WTC11 (cell line): ENCODE measurements at regions of chr12 and their contacts with region 1.

Region 1: DNA sequence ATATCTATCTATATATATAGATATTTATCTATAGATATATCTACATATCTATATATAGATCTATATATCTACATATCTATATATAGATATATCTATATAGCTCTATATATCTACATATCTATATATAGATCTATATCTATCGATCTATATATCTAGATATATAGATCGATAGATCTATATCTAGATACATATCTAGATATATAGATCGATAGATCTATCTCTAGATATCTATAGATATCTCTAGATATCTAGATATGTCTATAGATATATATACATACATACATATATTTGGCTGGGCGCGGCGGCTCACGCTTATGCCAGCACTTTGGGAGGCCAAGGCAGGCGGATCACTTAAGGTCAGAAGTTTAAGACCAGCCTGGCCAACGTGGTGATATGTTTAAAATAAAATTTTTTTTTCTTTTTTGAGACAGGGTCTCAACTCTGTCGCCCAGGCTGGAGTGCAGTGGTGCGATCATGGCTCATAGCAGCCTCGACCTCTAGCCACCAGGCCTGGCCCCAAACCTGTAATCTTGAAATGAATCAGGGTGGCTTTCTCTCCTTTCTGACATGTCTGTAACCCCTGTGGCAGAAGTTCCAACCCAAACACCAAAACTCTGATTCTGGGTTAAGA is 18.1 kb downstream of the ARPC3 start:
- DNase-seq: no peak
- ATAC-seq: no peak
- H3K4me3 Mint-ChIP-seq: no peak overlapping the region
- H3K27ac Mint-ChIP-seq: no peak overlapping the region
- H3K4me1 Mint-ChIP-seq: no peaks in the 10 kb centered on the region
- H3K27me3 Mint-ChIP-seq: no peaks in the 10 kb centered on the region
- CTCF ChIP-seq: no peak

Region 2: GRCh38 chr12:110056147-110056484 is 376.0 kb before region 1 on chr12:
- CTCF ChIA-PET with region 1: no interaction called
- POLR2A ChIA-PET with region 1: no interaction called
- DNase-seq: no peak
- ATAC-seq: no peak
- H3K4me3 Mint-ChIP-seq: no peak overlapping the region
- H3K27ac Mint-ChIP-seq: no peak overlapping the region
- H3K4me1 Mint-ChIP-seq: no peaks in the 10 kb centered on the region
- H3K27me3 Mint-ChIP-seq: peaks cover 23% of the 10 kb centered on the region
- CTCF ChIP-seq: no peak

Region 3: GRCh38 chr12:110111476-110112334 is 320.4 kb before region 1 on chr12:
- CTCF ChIA-PET with region 1: interaction called, 10 read pairs
- POLR2A ChIA-PET with region 1: no interaction called
- DNase-seq: no peak
- ATAC-seq: no peak
- H3K4me3 Mint-ChIP-seq: no peak overlapping the region
- H3K27ac Mint-ChIP-seq: no peak overlapping the region
- H3K4me1 Mint-ChIP-seq: peaks cover 9% of the 10 kb centered on the region
- H3K27me3 Mint-ChIP-seq: no peaks in the 10 kb centered on the region
- CTCF ChIP-seq: no peak

Region 4: GRCh38 chr12:110289044-110289710 is 142.9 kb before region 1 on chr12:
- CTCF ChIA-PET with region 1: no interaction called
- POLR2A ChIA-PET with region 1: no interaction called
- DNase-seq: no peak
- ATAC-seq: no peak
- H3K4me3 Mint-ChIP-seq: no peak overlapping the region
- H3K27ac Mint-ChIP-seq: 0 out of 2 replicates have a peak overlapping the region, but pooled peaks have one; percentile 35
- H3K4me1 Mint-ChIP-seq: peaks cover 25% of the 10 kb centered on the region
- H3K27me3 Mint-ChIP-seq: no peaks in the 10 kb centered on the region
- CTCF ChIP-seq: no peak

Region 5: GRCh38 chr12:110349531-110350151 is 82.4 kb before region 1 on chr12:
- CTCF ChIA-PET with region 1: interaction called, 46 read pairs
- POLR2A ChIA-PET with region 1: no interaction called
- DNase-seq: no peak
- ATAC-seq: no peak; the same call in 1 of the 2 replicates
- H3K4me3 Mint-ChIP-seq: no peak overlapping the region
- H3K27ac Mint-ChIP-seq: no peak overlapping the region; the same call in 1 of the 2 replicates
- H3K4me1 Mint-ChIP-seq: no peaks in the 10 kb centered on the region
- H3K27me3 Mint-ChIP-seq: no peaks in the 10 kb centered on the region
- CTCF ChIP-seq: no peak

Region 6: GRCh38 chr12:110379197-110379596 is 52.9 kb before region 1 on chr12:
- CTCF ChIA-PET with region 1: interaction called, 13 read pairs
- POLR2A ChIA-PET with region 1: no interaction called
- DNase-seq: no peak
- ATAC-seq: no peak
- H3K4me3 Mint-ChIP-seq: no peak overlapping the region
- H3K27ac Mint-ChIP-seq: no peak overlapping the region
- H3K4me1 Mint-ChIP-seq: no peaks in the 10 kb centered on the region
- H3K27me3 Mint-ChIP-seq: no peaks in the 10 kb centered on the region
- CTCF ChIP-seq: no peak

Region 7: GRCh38 chr12:110449799-110450497 is 17.9 kb after region 1 on chr12 and contains the start of gene ARPC3:
- CTCF ChIA-PET with region 1: interaction called, 61 read pairs
- POLR2A ChIA-PET with region 1: interaction called, 8 read pairs
- DNase-seq: peak; percentile 94
- ATAC-seq: peak; percentile 97
- H3K4me3 Mint-ChIP-seq: peak within 1 kb of the TSS; percentile 100
- H3K27ac Mint-ChIP-seq: peak within 1 kb of the TSS; percentile 98
- H3K4me1 Mint-ChIP-seq: peaks cover 7% of the 10 kb centered on the region; the same call in 1 of the 2 replicates
- H3K27me3 Mint-ChIP-seq: no peaks in the 10 kb centered on the region; the same call in 1 of the 2 replicates
- CTCF ChIP-seq: peak; percentile 50; the same call in 1 of the 2 replicates
- total RNA-seq, gene ARPC3: 145 to 163 TPM (median 149 TPM) in 3 replicates